Common myeloid progenitor, CD34-positive (primary cell): ENCODE measurements at regions of chr10 and their contacts with region 1.

Region 1: DNA sequence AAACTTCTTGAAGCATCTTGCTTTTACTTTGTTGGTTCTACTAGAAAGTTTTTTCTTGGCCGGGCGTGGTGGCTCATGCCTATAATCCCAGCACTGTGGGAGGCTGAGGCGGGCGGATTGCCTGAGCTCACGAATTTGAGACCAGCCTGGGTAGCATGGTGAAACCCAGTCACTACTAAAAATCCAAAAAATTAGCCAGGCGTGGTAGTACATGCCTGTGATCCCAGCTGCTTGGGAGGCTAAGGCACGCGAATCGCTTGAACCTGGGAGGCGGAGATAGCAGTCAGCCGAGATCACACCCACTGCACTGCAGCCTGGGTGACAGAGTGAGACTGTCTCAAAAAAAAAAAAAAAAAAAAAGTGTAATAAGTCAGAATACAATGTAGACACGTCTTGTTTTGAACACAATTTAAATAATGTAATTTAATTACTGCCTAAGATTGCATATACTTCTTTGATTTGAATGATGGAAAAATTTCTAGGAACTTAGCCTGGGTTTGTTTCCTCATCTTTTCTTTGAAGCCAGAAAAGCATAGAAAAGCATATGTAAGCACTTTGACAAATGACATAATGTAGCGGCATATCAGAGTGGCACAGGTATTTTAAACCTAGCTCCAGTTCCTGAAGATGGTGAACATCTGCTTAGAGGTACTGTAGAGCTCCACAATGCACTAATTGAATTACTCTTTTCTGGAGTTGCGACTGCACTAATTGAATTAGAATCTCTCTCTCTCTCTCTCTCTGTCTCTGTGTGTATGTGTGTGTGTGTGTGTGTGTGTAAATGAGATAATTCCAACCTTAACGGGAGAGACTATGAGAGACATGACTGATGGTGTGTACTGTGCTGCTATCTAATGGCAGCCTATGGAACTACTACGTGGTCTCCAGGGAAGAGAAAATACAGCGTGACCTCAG is 87.8 kb downstream of the BTRC start:
- DNase-seq: peak; percentile 71 to 85 (median 81)
- H3K4me3 ChIP-seq: no peak overlapping the region
- H3K27ac ChIP-seq: no peak overlapping the region
- H3K4me1 ChIP-seq: no peaks in the 10 kb centered on the region
- H3K27me3 ChIP-seq: peaks cover 0 to 7% (median 0%) of the 10 kb centered on the region in 5 experiments

Region 2: GRCh38 chr10:101311185-101312066 is 130.4 kb before region 1 on chr10:
- CTCF ChIA-PET with region 1: interaction called, 28 read pairs
- POLR2A ChIA-PET with region 1: no interaction called
- DNase-seq: no peak
- H3K4me3 ChIP-seq: peak overlapping the region in 1 of 7 experiments; percentile 12
- H3K27ac ChIP-seq: no peak overlapping the region
- H3K4me1 ChIP-seq: peaks cover 0 to 8% (median 2%) of the 10 kb centered on the region in 4 experiments
- H3K27me3 ChIP-seq: peaks cover 10 to 72% (median 20%) of the 10 kb centered on the region in 5 experiments

Region 3: DNA sequence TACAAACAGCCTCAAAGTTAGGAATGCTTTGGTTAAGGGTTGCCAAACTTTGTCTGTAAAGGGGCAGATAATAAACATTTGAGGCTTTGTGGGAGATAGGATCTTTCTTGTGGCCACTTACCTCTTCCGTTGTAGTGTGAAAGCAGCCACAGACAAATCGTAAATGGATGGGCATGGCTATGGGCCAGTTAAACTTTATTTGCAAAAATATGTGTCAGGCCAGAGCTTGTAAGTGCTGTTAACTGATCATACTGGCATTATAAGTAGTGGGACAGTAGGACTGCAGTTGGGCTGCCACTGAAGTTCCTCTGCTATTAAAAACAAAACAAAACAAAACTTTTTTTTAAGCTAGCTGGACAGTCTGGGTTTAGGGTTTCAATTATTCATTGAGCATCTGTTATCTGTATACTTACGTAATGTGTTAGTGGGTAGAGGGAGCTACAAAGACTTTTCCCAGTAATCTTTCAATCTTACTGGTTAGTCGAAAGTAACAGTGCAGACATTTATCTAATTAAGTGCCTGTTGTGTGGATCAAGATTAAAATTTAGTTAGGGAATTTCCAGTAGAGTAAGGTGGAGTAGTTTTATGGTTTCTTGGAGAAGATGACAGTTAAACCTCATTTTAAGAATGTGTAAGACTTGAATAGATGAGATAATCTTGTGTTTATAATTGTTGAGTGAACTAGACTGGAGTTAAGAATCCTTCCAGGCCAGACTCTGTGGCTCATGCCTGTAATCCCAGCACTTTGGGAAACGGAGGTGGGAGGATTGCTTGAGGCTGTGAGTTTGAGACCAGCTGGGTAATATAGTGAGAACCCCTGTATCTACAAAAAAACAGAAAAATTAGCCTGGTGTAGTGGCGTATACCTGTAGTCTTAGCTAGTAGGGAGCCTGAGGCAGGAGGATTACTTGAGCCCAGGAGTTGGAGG is 12.3 kb after region 1 on chr10:
- CTCF ChIA-PET with region 1: interaction called, 14 read pairs
- POLR2A ChIA-PET with region 1: no interaction called
- DNase-seq: peak; percentile 74 to 90 (median 87)
- H3K4me3 ChIP-seq: peak overlapping the region in 1 of 7 experiments; percentile 8
- H3K27ac ChIP-seq: no peak overlapping the region
- H3K4me1 ChIP-seq: peaks cover 13 to 32% (median 18%) of the 10 kb centered on the region in 4 experiments
- H3K27me3 ChIP-seq: peaks cover 0 to 65% (median 15%) of the 10 kb centered on the region in 5 experiments

Region 4: DNA sequence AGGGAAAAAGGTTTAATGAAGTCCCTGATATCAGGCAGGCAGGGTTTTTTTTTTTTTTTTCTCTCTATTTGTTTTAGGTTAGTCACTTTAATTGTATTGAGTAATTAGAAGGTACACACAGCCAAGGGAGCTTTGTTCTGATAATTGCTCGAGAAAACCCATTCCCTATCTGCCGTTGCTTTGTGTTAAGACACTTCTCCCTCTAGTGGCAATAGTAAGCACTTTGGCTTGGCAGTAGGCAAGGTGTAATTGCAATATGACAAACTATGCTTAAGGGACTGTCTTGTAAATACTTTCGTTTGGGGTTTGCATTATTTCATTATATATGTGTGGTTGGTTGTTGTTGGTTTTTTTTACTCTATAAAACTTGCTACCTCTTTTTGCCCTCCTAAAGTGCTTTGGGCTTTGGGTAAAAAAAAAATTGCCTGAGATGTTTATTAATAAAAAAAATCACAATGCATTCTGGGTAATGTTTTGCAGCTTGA is 25.5 kb after region 1 on chr10:
- CTCF ChIA-PET with region 1: interaction called, 48 read pairs
- POLR2A ChIA-PET with region 1: no interaction called
- DNase-seq: peak; percentile 78 to 89 (median 87)
- H3K4me3 ChIP-seq: peak overlapping the region in 1 of 7 experiments; percentile 24
- H3K27ac ChIP-seq: no peak overlapping the region
- H3K4me1 ChIP-seq: no peaks in the 10 kb centered on the region
- H3K27me3 ChIP-seq: peaks cover 0 to 3% (median 0%) of the 10 kb centered on the region in 5 experiments

Region 5: DNA sequence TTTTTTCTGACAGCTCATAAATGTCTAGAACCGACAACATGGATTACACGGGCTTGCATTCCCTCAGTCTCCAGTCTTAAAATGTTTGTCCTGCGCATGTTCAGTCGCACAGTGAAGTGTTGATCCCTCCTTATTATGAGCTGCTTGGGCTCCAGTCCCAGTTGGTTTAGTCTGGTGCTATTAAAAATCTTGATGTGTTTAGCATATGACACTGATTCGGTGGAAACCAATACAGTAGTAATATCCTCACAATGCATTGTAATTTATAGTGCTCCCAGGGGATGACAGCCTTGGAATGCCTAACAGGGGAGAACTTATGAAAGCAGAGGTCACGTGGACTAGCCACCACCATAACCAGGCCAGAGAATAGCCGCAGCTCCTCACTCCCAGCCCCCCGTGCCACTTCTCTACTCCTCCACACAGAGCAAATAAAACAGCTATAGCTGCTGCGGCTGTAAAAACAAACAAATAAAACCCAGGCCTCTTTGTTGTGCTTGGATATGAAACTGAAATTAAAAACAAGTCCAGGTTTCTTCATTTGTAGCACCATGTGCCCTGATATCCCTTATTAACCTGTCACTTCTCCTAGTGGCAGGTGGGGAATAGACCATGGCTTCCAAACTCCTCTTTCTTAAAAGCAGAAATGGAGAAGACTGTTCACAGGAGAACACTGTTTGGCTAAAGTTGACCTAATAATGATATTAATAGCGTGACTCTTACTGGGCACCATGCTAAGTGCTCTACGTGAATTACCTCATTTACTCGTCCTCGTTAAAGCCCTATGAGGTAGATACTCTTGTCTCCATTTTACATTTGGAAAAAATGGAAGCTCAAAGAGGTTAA is 154.0 kb after region 1 on chr10:
- CTCF ChIA-PET with region 1: no interaction called
- POLR2A ChIA-PET with region 1: no interaction called
- DNase-seq: no peak
- H3K4me3 ChIP-seq: no peak overlapping the region
- H3K27ac ChIP-seq: no peak overlapping the region
- H3K4me1 ChIP-seq: peaks cover 0 to 5% (median 1%) of the 10 kb centered on the region in 4 experiments
- H3K27me3 ChIP-seq: no peaks in the 10 kb centered on the region